ENCODE measurements at regions of chr18 and their contacts with region 1.

Region 1: GRCh38 chr18:28050545-28050944 is 126.4 kb downstream of the CDH2 start:
- DNase-seq: no peak
- ATAC-seq: no peak
- H3K4me3 ChIP-seq: no peak overlapping the region
- H3K27ac ChIP-seq: no peak overlapping the region
- H3K4me1 ChIP-seq: no peaks in the 10 kb centered on the region
- H3K27me3 ChIP-seq: no peaks in the 10 kb centered on the region
- CTCF ChIP-seq: no peak

Region 2: DNA sequence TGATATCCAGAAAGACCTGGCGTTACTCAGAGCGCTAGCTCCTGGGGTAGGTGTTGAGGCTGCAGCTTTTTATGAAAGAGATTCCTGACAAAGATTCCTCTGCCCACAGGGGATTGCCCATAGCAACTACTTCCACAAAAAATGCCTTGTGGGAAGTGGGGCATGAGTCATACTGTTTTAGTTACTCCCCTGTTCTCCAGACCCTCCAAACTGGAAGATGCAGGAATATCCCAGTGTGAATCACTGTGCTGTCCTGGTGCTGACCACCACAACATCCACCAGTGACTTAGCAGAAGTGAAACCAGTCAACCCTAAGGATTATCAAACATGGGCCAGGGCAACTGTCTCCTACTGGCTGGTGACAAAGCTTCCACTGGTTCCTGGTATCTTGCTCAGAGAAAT is 64.6 kb after region 1 on chr18:
- intact Hi-C with region 1: loop called in 1 of 2 experiments (anchors 10 kb)
- DNase-seq: no peak
- ATAC-seq: no peak
- H3K4me3 ChIP-seq: no peak overlapping the region
- H3K27ac ChIP-seq: no peak overlapping the region
- H3K4me1 ChIP-seq: no peaks in the 10 kb centered on the region
- H3K27me3 ChIP-seq: no peaks in the 10 kb centered on the region
- CTCF ChIP-seq: no peak

Region 3: DNA sequence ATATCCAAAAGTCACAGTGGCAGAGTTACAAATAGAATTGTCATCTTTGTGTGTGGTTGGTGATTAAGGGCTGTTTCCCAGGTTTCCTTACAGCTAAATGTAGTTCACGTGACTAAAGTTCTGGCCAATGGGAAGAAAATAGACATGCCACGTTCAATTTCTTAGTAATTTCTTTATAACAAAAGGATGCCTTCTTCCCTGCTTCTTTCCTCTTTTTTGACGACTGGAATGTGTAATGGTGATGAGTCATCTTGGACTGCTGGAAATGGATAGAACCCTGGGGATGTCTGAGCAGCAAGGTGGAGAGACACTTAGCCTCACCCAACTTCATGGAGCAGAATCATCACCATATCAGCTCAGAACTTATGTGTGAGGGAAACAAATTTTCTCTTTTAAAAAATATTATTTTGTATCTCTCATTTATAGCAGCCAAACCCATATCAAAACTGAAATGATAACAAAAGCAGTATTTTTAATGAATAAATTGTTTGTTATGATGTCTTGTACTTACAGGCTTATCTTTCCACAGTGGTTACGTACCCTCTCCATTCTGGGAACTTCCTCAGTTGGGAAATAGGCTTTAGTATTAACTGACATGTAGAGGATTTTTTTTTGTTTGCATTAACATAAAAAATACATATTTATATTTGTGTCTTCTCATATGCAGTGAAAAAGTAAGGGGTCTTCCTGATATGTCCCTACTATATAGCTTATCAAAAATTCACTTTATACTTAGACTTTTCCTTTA is 217.5 kb after region 1 on chr18:
- intact Hi-C with region 1: no loop called
- DNase-seq: no peak
- ATAC-seq: no peak
- H3K4me3 ChIP-seq: no peak overlapping the region
- H3K27ac ChIP-seq: no peak overlapping the region
- H3K4me1 ChIP-seq: no peaks in the 10 kb centered on the region
- H3K27me3 ChIP-seq: no peaks in the 10 kb centered on the region
- CTCF ChIP-seq: no peak